ENCODE measurements at regions of chr17 and their contacts with region 1.

Region 1: DNA sequence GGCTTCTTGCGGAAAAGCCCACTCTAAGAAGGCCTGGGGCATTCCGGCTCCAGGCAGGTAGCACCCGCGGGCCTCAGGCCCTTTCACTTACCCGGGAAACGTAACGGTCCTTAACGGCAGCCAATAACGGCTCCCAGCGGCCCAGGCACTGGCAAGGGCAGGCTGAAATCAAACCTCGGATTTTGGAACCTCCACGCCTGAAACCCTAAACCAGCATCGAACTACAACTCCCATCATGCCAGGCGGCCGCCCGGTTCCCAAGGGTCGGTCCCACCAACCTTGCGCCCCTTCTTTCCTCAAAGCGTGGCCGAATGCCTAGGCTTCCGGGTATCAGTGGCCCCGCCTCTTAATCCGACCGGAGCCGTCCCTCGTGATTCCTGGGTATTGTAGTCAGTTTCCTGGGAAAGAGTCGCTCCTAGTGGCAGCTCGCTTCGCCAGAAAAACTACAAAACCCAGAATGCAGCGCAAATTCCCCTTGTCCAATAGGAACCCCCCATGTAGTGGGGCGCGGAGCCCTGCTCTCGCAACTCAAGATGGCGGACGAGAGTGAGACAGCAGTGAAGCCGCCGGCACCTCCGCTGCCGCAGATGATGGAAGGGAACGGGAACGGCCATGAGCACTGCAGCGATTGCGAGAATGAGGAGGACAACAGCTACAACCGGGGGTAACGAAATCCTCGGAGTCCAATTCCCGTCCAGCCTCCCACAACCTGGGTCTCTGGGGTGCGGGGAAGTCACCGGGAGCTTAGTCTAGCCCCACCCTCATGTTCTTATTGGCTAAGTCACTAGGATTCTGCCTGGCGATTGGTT is at the start of gene NMT1:
- DNase-seq: peak; percentile 81 to 98 (median 98)
- ATAC-seq: peak; percentile 95
- H3K4me3 ChIP-seq: peak within 1 kb of the TSS; percentile 97
- H3K4me3 Mint-ChIP-seq: peak within 1 kb of the TSS; percentile 80 to 100 (median 98)
- H3K27ac ChIP-seq: peak within 1 kb of the TSS; percentile 87
- H3K27ac Mint-ChIP-seq: peak within 1 kb of the TSS; percentile 88 to 99 (median 97)
- H3K4me1 ChIP-seq: peaks cover 18 to 20% of the 10 kb centered on the region in 2 donors
- H3K4me1 Mint-ChIP-seq: peaks cover 26 to 66% (median 53%) of the 10 kb centered on the region in 7 donors
- H3K27me3 ChIP-seq: no peaks in the 10 kb centered on the region
- H3K27me3 Mint-ChIP-seq: no peaks in the 10 kb centered on the region
- total RNA-seq, gene NMT1: 59.5 to 136 (median 121) TPM

Region 2: GRCh38 chr17:44314869-44315661 is 745.9 kb before region 1 on chr17:
- CTCF ChIA-PET with region 1: no interaction called
- POLR2A ChIA-PET with region 1: no interaction called
- intact Hi-C with region 1: no loop called
- DNase-seq: peak in 5 of 9 donors; percentile 21 to 58 (median 33)
- ATAC-seq: peak; percentile 60
- H3K4me3 ChIP-seq: peak overlapping the region; percentile 47
- H3K4me3 Mint-ChIP-seq: peak overlapping the region; percentile 15 to 87 (median 79)
- H3K27ac ChIP-seq: no peak overlapping the region
- H3K27ac Mint-ChIP-seq: peak overlapping the region in 1 of 9 donors; percentile 16
- H3K4me1 ChIP-seq: peaks cover 0 to 17% of the 10 kb centered on the region in 2 donors
- H3K4me1 Mint-ChIP-seq: peaks cover 11 to 24% (median 18%) of the 10 kb centered on the region in 7 donors
- H3K27me3 ChIP-seq: peaks cover 0 to 21% of the 10 kb centered on the region in 2 donors
- H3K27me3 Mint-ChIP-seq: peaks cover 25 to 48% (median 38%) of the 10 kb centered on the region in 5 donors

Region 3: GRCh38 chr17:44792276-44792675 is 268.7 kb before region 1 on chr17:
- CTCF ChIA-PET with region 1: no interaction called
- POLR2A ChIA-PET with region 1: no interaction called
- intact Hi-C with region 1: no loop called
- DNase-seq: no peak
- ATAC-seq: no peak
- H3K4me3 ChIP-seq: no peak overlapping the region
- H3K4me3 Mint-ChIP-seq: no peak overlapping the region
- H3K27ac ChIP-seq: no peak overlapping the region
- H3K27ac Mint-ChIP-seq: no peak overlapping the region
- H3K4me1 ChIP-seq: no peaks in the 10 kb centered on the region
- H3K4me1 Mint-ChIP-seq: peaks cover 0 to 4% (median 0%) of the 10 kb centered on the region in 7 donors
- H3K27me3 ChIP-seq: no peaks in the 10 kb centered on the region
- H3K27me3 Mint-ChIP-seq: peaks cover 0 to 4% (median 0%) of the 10 kb centered on the region in 5 donors

Region 4: DNA sequence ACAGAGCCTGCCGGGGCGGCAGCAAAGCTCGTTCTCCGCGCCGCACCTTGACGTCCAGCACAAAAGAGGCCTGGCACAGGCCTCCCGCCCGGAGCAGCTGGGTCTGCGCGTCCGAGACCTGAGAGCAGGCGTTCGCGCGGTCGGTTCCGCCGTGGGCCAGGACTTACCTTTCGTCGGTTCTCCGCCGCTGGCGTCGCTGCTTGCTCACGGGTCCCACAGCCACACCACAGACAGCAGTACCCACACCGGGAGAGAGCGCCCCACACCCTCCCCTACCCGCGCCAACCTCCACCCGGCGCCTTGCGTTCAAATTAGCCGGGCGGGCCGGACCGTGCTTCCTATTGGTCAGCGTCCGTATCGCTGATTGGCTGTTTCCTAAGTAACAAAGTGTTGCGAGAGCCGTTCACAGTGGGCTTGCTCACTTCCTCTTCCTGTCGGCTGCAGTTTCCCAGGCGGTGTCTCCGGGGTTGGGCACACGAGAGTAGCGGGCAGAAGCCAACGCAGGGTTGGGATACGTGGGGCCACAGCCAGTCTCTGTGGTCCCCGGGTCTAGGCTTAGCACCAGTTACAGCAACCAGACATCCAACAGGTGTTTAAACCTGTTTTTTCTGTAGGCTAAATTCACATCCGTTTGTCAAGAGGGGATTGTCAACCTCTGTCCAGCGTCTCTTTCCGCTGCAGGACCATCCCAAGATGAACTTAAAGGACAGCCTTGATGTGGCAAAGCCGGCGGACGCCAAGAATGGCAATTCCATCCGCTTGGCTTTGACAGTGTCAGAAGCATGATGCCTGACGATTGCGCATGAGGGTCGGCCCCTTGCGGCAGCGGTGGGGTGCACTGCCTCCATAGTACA is 113.3 kb before region 1 on chr17 and contains the start of gene KIF18B:
- CTCF ChIA-PET with region 1: no interaction called
- POLR2A ChIA-PET with region 1: no interaction called
- intact Hi-C with region 1: loop called in 1 of 2 experiments (anchors 1 kb)
- DNase-seq: peak; percentile 73 to 91 (median 86)
- ATAC-seq: peak; percentile 99
- H3K4me3 ChIP-seq: peak within 1 kb of the TSS; percentile 83
- H3K4me3 Mint-ChIP-seq: peak within 1 kb of the TSS; percentile 85 to 98 (median 93)
- H3K27ac ChIP-seq: peak within 1 kb of the TSS; percentile 69
- H3K27ac Mint-ChIP-seq: peak within 1 kb of the TSS; percentile 86 to 98 (median 93)
- H3K4me1 ChIP-seq: peaks cover 5 to 6% of the 10 kb centered on the region in 2 donors
- H3K4me1 Mint-ChIP-seq: peaks cover 0 to 40% (median 5%) of the 10 kb centered on the region in 7 donors
- H3K27me3 ChIP-seq: no peaks in the 10 kb centered on the region
- H3K27me3 Mint-ChIP-seq: peaks cover 0 to 7% (median 0%) of the 10 kb centered on the region in 5 donors
- total RNA-seq, gene KIF18B: 0.17 to 57.2 TPM in 2 of 5 experiments, not detected in the others

Region 5: GRCh38 chr17:45073414-45074070 is 12.5 kb after region 1 on chr17:
- CTCF ChIA-PET with region 1: no interaction called
- POLR2A ChIA-PET with region 1: interaction called, 15 read pairs
- intact Hi-C with region 1: no loop called
- DNase-seq: no peak
- ATAC-seq: no peak
- H3K4me3 ChIP-seq: no peak overlapping the region
- H3K4me3 Mint-ChIP-seq: no peak overlapping the region
- H3K27ac ChIP-seq: no peak overlapping the region
- H3K27ac Mint-ChIP-seq: peak overlapping the region in 1 of 9 donors; percentile 0
- H3K4me1 ChIP-seq: no peaks in the 10 kb centered on the region
- H3K4me1 Mint-ChIP-seq: peaks cover 17 to 41% (median 35%) of the 10 kb centered on the region in 7 donors
- H3K27me3 ChIP-seq: no peaks in the 10 kb centered on the region
- H3K27me3 Mint-ChIP-seq: no peaks in the 10 kb centered on the region

Region 6: GRCh38 chr17:45161019-45161825 is 100.2 kb after region 1 on chr17:
- CTCF ChIA-PET with region 1: no interaction called
- POLR2A ChIA-PET with region 1: interaction called, 11 read pairs
- intact Hi-C with region 1: loop called (anchors 1 kb)
- DNase-seq: peak; percentile 89 to 100 (median 99)
- ATAC-seq: peak; percentile 93
- H3K4me3 ChIP-seq: peak overlapping the region; percentile 95
- H3K4me3 Mint-ChIP-seq: peak overlapping the region; percentile 88 to 100 (median 96)
- H3K27ac ChIP-seq: peak overlapping the region; percentile 98
- H3K27ac Mint-ChIP-seq: peak overlapping the region; percentile 97 to 100 (median 98)
- H3K4me1 ChIP-seq: peaks cover 15 to 27% of the 10 kb centered on the region in 2 donors
- H3K4me1 Mint-ChIP-seq: peaks cover 29 to 48% (median 43%) of the 10 kb centered on the region in 7 donors
- H3K27me3 ChIP-seq: no peaks in the 10 kb centered on the region
- H3K27me3 Mint-ChIP-seq: no peaks in the 10 kb centered on the region

Measured in naive thymus-derived CD4-positive, alpha-beta T cell (primary cell).